ENCODE measurements at regions of chr10 and their contacts with region 1.

Region 1: DNA sequence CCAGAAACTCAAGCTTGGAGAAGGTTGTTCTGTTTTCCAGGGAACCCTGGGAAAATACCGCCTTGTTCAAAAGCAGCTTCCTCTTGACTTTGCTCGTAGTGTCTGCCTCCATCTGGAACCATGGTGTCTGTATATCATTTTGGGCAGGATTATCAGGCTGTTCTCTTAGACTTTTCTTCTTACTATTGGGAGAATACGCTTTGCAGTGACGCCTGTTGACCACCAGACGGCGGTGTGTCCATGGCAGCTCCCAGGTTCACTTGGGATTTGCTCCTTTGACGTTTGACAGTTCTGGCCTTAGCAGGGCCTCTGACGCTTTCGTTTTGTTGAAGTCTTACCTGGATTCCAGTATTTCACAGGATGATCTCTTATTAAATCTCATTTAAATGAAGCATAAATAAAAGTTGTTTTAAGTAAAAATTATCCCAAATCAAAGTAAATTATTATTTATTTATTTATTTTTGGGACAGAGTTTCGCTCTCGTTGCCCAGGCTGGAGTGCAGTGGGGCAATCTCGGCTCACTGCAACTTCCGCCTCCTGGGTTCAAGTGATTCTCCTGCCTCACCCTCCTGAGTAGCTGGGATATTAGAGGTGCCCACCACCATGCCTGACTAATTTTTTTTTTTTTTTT is 41.8 kb upstream of the GJD4 start:
- DNase-seq: peak; percentile 45 to 68 (median 68)
- ATAC-seq: peak; percentile 85 to 92 (median 88)
- H3K4me3 ChIP-seq: no peak overlapping the region
- H3K27ac ChIP-seq: no peak overlapping the region
- H3K4me1 ChIP-seq: no peaks in the 10 kb centered on the region
- H3K27me3 ChIP-seq: no peaks in the 10 kb centered on the region
- CTCF ChIP-seq: peak; percentile 84 to 99 (median 97)
- POLR2A ChIP-seq: no peak

Region 2: DNA sequence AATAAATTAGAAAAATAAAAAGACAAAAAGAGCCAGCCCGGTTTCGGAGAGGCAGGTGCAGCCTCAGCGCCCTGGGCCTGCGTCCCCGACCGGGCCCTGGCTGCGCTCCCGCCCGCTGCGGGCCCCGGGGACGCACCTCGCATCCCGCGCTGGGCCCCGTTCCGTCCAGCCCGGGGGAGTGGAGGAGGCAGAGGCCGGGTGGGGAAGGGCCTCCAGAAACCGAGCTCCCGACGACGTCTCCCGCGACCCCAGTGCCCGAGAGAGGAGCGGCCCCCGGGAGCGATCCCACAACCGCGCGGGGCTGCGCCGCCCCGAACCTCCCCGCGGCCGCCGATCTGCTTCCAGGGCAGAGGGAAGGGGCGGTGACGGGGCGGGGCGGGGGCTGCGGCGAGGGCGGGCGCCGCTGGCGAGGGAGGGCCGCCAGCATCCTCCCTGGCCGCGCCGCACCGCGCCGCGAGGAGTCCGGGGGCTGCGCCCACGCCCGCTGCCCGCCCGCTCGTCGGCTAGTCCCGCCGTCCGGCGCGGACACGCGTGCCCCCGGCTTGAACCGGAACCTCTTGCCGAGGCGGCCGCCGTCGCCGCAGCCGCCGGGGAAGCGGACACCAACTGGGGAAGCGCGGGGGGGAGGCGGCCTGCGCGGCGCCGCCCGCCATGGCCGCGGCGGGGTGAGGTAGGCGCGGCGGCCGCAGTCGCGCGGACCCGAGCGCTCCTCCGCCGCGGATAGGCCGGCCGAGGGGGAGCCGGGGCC is 227.1 kb before region 1 on chr10 and contains the start of gene CCNY:
- intact Hi-C with region 1: loop called in 1 of 2 experiments (anchors 10 kb)
- DNase-seq: peak; percentile 88 to 89 (median 88)
- ATAC-seq: peak; percentile 82 to 95 (median 89)
- H3K4me3 ChIP-seq: peak within 1 kb of the TSS; percentile 83 to 93 (median 89)
- H3K27ac ChIP-seq: peak within 1 kb of the TSS; percentile 64 to 85 (median 76)
- H3K4me1 ChIP-seq: peaks cover 0 to 39% (median 16%) of the 10 kb centered on the region in 4 donors
- H3K27me3 ChIP-seq: no peaks in the 10 kb centered on the region
- CTCF ChIP-seq: no peak
- POLR2A ChIP-seq: peak; percentile 85
- total RNA-seq, gene CCNY: 22.4 to 49.2 (median 41.4) TPM

Region 3: GRCh38 chr10:35379226-35380137 is 183.9 kb before region 1 on chr10:
- intact Hi-C with region 1: no loop called
- DNase-seq: peak in 1 of 3 donors; percentile 40
- ATAC-seq: peak; percentile 70 to 86 (median 84)
- H3K4me3 ChIP-seq: no peak overlapping the region
- H3K27ac ChIP-seq: peak overlapping the region in 2 of 3 donors; percentile 50 to 58
- H3K4me1 ChIP-seq: peaks cover 0 to 2% (median 0%) of the 10 kb centered on the region in 4 donors
- H3K27me3 ChIP-seq: no peaks in the 10 kb centered on the region
- CTCF ChIP-seq: no peak
- POLR2A ChIP-seq: no peak

Region 4: GRCh38 chr10:35495521-35496119 is 67.8 kb before region 1 on chr10:
- intact Hi-C with region 1: no loop called
- DNase-seq: peak in 2 of 3 donors; percentile 44 to 72
- ATAC-seq: peak; percentile 86 to 91 (median 88)
- H3K4me3 ChIP-seq: no peak overlapping the region
- H3K27ac ChIP-seq: peak overlapping the region; percentile 5 to 50 (median 12)
- H3K4me1 ChIP-seq: peaks cover 0 to 23% (median 6%) of the 10 kb centered on the region in 4 donors
- H3K27me3 ChIP-seq: no peaks in the 10 kb centered on the region
- CTCF ChIP-seq: no peak
- POLR2A ChIP-seq: no peak

Measured in right lobe of liver (tissue), 6 donors.